ENCODE measurements at regions of chr21 and their contacts with region 1.

Region 1: GRCh38 chr21:33924079-33924765 is 8.6 kb upstream of the ATP5PO start:
- DNase-seq: peak; percentile 66 to 79 (median 76)
- H3K4me3 ChIP-seq: no peak overlapping the region
- H3K4me3 Mint-ChIP-seq: no peak overlapping the region
- H3K27ac ChIP-seq: no peak overlapping the region
- H3K27ac Mint-ChIP-seq: peak overlapping the region in 1 of 7 donors; percentile 13
- H3K4me1 ChIP-seq: peaks cover 0 to 4% of the 10 kb centered on the region in 2 donors
- H3K4me1 Mint-ChIP-seq: peaks cover 4% of the 10 kb centered on the region
- H3K27me3 ChIP-seq: no peaks in the 10 kb centered on the region
- H3K27me3 Mint-ChIP-seq: peaks cover 0 to 2% (median 2%) of the 10 kb centered on the region in 3 donors
- CTCF ChIP-seq: peak; percentile 83

Region 2: GRCh38 chr21:33881689-33882440 is 42.4 kb before region 1 on chr21:
- intact Hi-C with region 1: no loop called
- DNase-seq: no peak
- H3K4me3 ChIP-seq: no peak overlapping the region
- H3K4me3 Mint-ChIP-seq: no peak overlapping the region
- H3K27ac ChIP-seq: no peak overlapping the region
- H3K27ac Mint-ChIP-seq: no peak overlapping the region
- H3K4me1 ChIP-seq: no peaks in the 10 kb centered on the region
- H3K4me1 Mint-ChIP-seq: no peaks in the 10 kb centered on the region
- H3K27me3 ChIP-seq: no peaks in the 10 kb centered on the region
- H3K27me3 Mint-ChIP-seq: peaks cover 0 to 6% (median 1%) of the 10 kb centered on the region in 3 donors
- CTCF ChIP-seq: no peak

Region 3: GRCh38 chr21:34073032-34073869 is 149.0 kb after region 1 on chr21 and contains the starts of genes MRPS6 and SLC5A3:
- intact Hi-C with region 1: loop called (anchors 5 kb)
- DNase-seq: peak; percentile 76 to 78 (median 76)
- H3K4me3 ChIP-seq: peak within 1 kb of the TSS; percentile 70 to 99 (median 82)
- H3K4me3 Mint-ChIP-seq: peak within 1 kb of the TSS; percentile 92 to 96
- H3K27ac ChIP-seq: peak within 1 kb of the TSS; percentile 65 to 71
- H3K27ac Mint-ChIP-seq: peak within 1 kb of the TSS; percentile 67 to 88 (median 83)
- H3K4me1 ChIP-seq: peaks cover 25 to 35% of the 10 kb centered on the region in 2 donors
- H3K4me1 Mint-ChIP-seq: peaks cover 37% of the 10 kb centered on the region
- H3K27me3 ChIP-seq: no peaks in the 10 kb centered on the region
- H3K27me3 Mint-ChIP-seq: peaks cover 2 to 5% (median 3%) of the 10 kb centered on the region in 3 donors
- CTCF ChIP-seq: no peak
- polyA plus RNA-seq, gene MRPS6: 29.8 to 124 (median 101) TPM
- polyA plus RNA-seq, gene SLC5A3: 1.2 to 3.3 (median 1.6) TPM

Region 4: GRCh38 chr21:34202553-34203372 is 278.5 kb after region 1 on chr21:
- intact Hi-C with region 1: loop called (anchors 5 to 10 kb)
- DNase-seq: peak; percentile 24 to 77 (median 52)
- H3K4me3 ChIP-seq: peak overlapping the region; percentile 40 to 76 (median 57)
- H3K4me3 Mint-ChIP-seq: peak overlapping the region; percentile 76 to 90
- H3K27ac ChIP-seq: peak overlapping the region; percentile 84 to 92
- H3K27ac Mint-ChIP-seq: peak overlapping the region; percentile 98 to 99 (median 99)
- H3K4me1 ChIP-seq: peaks cover 90 to 98% of the 10 kb centered on the region in 2 donors
- H3K4me1 Mint-ChIP-seq: peaks cover 93% of the 10 kb centered on the region
- H3K27me3 ChIP-seq: no peaks in the 10 kb centered on the region
- H3K27me3 Mint-ChIP-seq: peaks cover 0 to 2% (median 0%) of the 10 kb centered on the region in 3 donors
- CTCF ChIP-seq: no peak

Region 5: GRCh38 chr21:34243562-34243961 is 319.3 kb after region 1 on chr21:
- intact Hi-C with region 1: loop called (anchors 5 kb)
- DNase-seq: peak; percentile 31 to 61 (median 61)
- H3K4me3 ChIP-seq: no peak overlapping the region
- H3K4me3 Mint-ChIP-seq: no peak overlapping the region
- H3K27ac ChIP-seq: no peak overlapping the region
- H3K27ac Mint-ChIP-seq: peak overlapping the region in 1 of 7 donors; percentile 14
- H3K4me1 ChIP-seq: no peaks in the 10 kb centered on the region
- H3K4me1 Mint-ChIP-seq: peaks cover 5% of the 10 kb centered on the region
- H3K27me3 ChIP-seq: no peaks in the 10 kb centered on the region
- H3K27me3 Mint-ChIP-seq: peaks cover 4 to 5% (median 4%) of the 10 kb centered on the region in 3 donors
- CTCF ChIP-seq: peak; percentile 71

Region 6: GRCh38 chr21:34345892-34346291 is 421.7 kb after region 1 on chr21:
- intact Hi-C with region 1: loop called (anchors 2 kb)
- DNase-seq: no peak
- H3K4me3 ChIP-seq: no peak overlapping the region
- H3K4me3 Mint-ChIP-seq: no peak overlapping the region
- H3K27ac ChIP-seq: no peak overlapping the region
- H3K27ac Mint-ChIP-seq: no peak overlapping the region
- H3K4me1 ChIP-seq: no peaks in the 10 kb centered on the region
- H3K4me1 Mint-ChIP-seq: peaks cover 2% of the 10 kb centered on the region
- H3K27me3 ChIP-seq: no peaks in the 10 kb centered on the region
- H3K27me3 Mint-ChIP-seq: peaks cover 2 to 17% (median 6%) of the 10 kb centered on the region in 3 donors
- CTCF ChIP-seq: no peak